CD8-positive, alpha-beta T cell (primary cell): ENCODE measurements at regions of chr17 and their contacts with region 1.

Region 1: GRCh38 chr17:65794572-65794971 is 233.1 kb upstream of the AXIN2 start:
- DNase-seq: peak in 2 of 9 experiments; percentile 22 to 44
- ATAC-seq: no peak
- H3K4me3 ChIP-seq: no peak overlapping the region
- H3K4me3 Mint-ChIP-seq: no peak overlapping the region
- H3K27ac ChIP-seq: no peak overlapping the region
- H3K27ac Mint-ChIP-seq: no peak overlapping the region
- H3K4me1 ChIP-seq: no peaks in the 10 kb centered on the region
- H3K4me1 Mint-ChIP-seq: no peaks in the 10 kb centered on the region
- H3K27me3 ChIP-seq: no peaks in the 10 kb centered on the region
- H3K27me3 Mint-ChIP-seq: no peaks in the 10 kb centered on the region
- CTCF ChIP-seq: peak; percentile 53

Region 2: DNA sequence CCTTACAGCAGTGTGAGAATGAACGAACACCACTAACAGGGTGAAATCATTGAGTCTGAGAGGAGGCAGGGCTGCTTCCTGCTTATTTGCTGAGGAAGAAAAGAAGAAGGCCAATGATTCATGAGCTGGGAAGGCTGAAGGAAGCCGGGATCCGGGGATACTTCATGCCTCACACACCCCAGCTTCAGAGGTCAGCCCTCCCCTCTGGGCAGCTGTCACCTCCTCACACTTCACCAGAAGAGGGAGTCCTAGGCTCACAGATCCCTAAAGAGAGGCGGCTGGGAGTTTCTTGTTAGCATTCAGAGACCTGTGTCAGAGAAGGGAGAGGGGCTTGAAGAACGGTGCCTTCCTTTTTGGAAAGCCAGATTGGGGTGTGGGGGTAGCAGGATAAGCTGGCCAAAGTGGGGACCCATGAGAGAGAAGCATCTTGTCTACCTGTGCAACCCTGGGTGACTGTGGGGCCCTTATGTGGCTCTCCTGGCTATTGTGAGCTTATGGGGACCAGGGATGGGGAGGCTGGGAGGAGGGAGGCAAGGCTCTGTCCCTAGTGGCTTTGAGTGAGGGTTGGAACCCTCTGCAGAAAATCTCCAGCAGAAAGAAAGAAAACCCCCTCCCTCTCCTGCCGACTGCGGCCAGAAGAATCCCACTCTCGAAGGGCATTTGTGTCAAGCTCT is 562.8 kb before region 1 on chr17:
- CTCF ChIA-PET with region 1: interaction called, 4 read pairs
- POLR2A ChIA-PET with region 1: no interaction called
- intact Hi-C with region 1: loop called in 1 of 2 experiments (anchors 5 kb)
- DNase-seq: peak in 7 of 9 experiments; percentile 15 to 64 (median 28)
- ATAC-seq: no peak
- H3K4me3 ChIP-seq: no peak overlapping the region
- H3K4me3 Mint-ChIP-seq: no peak overlapping the region
- H3K27ac ChIP-seq: no peak overlapping the region
- H3K27ac Mint-ChIP-seq: no peak overlapping the region
- H3K4me1 ChIP-seq: peaks cover 21% of the 10 kb centered on the region
- H3K4me1 Mint-ChIP-seq: peaks cover 20% of the 10 kb centered on the region
- H3K27me3 ChIP-seq: no peaks in the 10 kb centered on the region
- H3K27me3 Mint-ChIP-seq: peaks cover 5% of the 10 kb centered on the region
- CTCF ChIP-seq: no peak

Region 3: DNA sequence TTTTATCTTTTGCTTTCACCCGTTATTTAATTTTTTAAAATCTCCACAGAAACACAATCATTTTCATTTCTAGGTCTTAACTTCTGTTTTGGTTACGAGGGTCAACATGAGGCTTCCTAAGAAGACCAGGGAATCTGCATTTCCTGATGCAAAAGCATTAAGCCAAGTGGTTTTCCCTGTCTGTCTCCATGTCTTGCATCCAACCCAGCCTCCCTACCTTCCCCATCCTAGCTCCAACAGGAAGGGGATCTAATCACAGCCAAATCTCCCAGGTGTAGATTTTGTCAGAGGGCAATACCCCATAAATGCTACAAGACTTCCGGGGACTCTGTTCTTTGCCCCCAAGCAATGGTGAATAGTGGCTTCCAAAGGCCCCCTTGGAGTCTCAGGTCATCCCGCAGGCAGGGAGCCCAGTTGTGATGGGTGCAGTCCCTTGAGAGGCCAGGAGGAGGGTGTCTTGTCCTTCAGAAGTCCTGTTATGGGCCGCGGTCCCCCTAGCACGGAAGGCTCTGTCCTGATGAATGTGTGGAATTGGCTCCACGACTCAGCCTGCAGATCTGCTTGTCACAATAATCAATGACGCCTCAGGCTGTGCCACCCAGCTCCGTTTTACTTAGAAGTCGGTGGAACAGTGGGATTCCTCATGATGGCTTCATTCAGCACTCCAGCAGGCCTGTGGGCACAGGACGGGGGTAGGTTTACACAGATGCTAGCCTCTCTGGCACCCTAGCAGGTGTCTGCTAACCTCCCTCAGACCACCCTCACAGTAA is 516.3 kb before region 1 on chr17:
- CTCF ChIA-PET with region 1: no interaction called
- POLR2A ChIA-PET with region 1: no interaction called
- intact Hi-C with region 1: loop called in 1 of 2 experiments (anchors 5 kb)
- DNase-seq: peak in 5 of 9 experiments; percentile 13 to 32 (median 20)
- ATAC-seq: peak; percentile 48
- H3K4me3 ChIP-seq: no peak overlapping the region
- H3K4me3 Mint-ChIP-seq: no peak overlapping the region
- H3K27ac ChIP-seq: no peak overlapping the region
- H3K27ac Mint-ChIP-seq: no peak overlapping the region
- H3K4me1 ChIP-seq: no peaks in the 10 kb centered on the region
- H3K4me1 Mint-ChIP-seq: peaks cover 11% of the 10 kb centered on the region
- H3K27me3 ChIP-seq: no peaks in the 10 kb centered on the region
- H3K27me3 Mint-ChIP-seq: peaks cover 18% of the 10 kb centered on the region
- CTCF ChIP-seq: peak; percentile 27

Region 4: DNA sequence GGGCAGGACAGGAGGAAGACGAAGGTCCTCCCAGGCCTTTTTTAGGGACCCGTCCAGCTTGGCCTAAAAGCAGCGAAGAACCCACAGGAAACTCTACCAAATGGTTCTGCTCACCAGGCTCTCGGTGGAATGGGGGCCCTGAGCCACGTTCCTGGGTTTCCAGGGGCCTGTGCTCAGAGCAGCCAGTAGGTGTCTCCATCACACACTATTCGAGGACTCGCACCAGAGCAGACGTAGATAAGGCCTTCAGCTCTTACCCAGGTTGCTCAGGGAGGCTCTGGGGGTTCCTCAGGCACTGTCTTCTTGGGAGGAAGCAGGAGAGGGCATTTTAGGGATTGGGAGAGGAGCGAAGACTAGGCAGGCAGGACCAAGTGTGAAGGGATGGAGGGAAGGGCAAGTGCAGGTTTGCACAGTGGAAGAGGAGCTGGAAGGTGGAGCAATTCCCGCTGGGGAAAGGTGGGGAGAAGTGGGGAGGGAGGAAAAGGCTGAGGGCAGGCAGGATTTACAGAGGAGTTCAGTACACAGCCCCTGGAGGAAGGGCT is 500.3 kb before region 1 on chr17:
- CTCF ChIA-PET with region 1: interaction called, 53 read pairs
- POLR2A ChIA-PET with region 1: no interaction called
- intact Hi-C with region 1: loop called in 1 of 2 experiments (anchors 1 kb)
- DNase-seq: peak; percentile 33 to 76 (median 61)
- ATAC-seq: peak; percentile 80
- H3K4me3 ChIP-seq: no peak overlapping the region
- H3K4me3 Mint-ChIP-seq: no peak overlapping the region
- H3K27ac ChIP-seq: no peak overlapping the region
- H3K27ac Mint-ChIP-seq: no peak overlapping the region
- H3K4me1 ChIP-seq: no peaks in the 10 kb centered on the region
- H3K4me1 Mint-ChIP-seq: peaks cover 4% of the 10 kb centered on the region
- H3K27me3 ChIP-seq: no peaks in the 10 kb centered on the region
- H3K27me3 Mint-ChIP-seq: no peaks in the 10 kb centered on the region
- CTCF ChIP-seq: peak; percentile 60

Region 5: DNA sequence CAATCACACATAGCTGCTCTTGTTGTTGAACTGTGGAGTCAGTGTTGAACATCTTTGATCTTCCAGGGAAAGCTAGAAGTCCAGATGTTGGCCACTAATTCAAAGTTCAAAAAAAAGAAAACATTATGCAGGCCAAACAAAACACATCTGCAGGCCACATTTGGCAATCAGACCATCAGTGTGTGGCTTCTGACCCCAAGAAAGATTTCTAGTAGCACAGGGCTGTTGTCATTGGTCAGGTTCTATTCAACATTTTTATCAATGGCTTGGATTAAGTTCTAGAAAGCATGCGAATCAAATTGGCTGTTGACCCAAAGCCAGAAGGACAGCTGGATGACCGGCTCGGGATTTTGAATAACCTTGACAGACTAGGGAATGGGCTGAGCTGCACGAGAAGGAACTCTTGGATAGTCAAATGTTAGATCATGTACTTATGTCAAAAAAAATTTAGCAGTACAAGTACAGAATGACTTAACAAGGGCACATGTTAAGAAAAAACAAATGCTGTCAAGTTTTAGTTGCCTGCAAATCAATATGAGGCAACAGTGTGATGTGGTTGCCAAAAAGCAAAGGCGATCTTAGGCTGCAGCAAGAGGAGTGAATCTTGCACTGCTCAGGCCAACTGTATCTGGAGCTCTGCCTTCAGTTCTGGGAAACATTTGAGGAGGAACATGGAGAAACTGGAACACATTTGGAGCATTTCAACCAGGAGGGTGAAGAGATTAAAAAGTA is 469.8 kb before region 1 on chr17:
- CTCF ChIA-PET with region 1: no interaction called
- POLR2A ChIA-PET with region 1: no interaction called
- intact Hi-C with region 1: no loop called
- DNase-seq: no peak
- ATAC-seq: no peak
- H3K4me3 ChIP-seq: no peak overlapping the region
- H3K4me3 Mint-ChIP-seq: no peak overlapping the region
- H3K27ac ChIP-seq: no peak overlapping the region
- H3K27ac Mint-ChIP-seq: no peak overlapping the region
- H3K4me1 ChIP-seq: no peaks in the 10 kb centered on the region
- H3K4me1 Mint-ChIP-seq: peaks cover 2% of the 10 kb centered on the region
- H3K27me3 ChIP-seq: no peaks in the 10 kb centered on the region
- H3K27me3 Mint-ChIP-seq: no peaks in the 10 kb centered on the region
- CTCF ChIP-seq: no peak

Region 6: GRCh38 chr17:65413390-65413789 is 381.2 kb before region 1 on chr17:
- CTCF ChIA-PET with region 1: no interaction called
- POLR2A ChIA-PET with region 1: no interaction called
- intact Hi-C with region 1: loop called in 1 of 2 experiments (anchors 5 kb)
- DNase-seq: no peak
- ATAC-seq: no peak
- H3K4me3 ChIP-seq: no peak overlapping the region
- H3K4me3 Mint-ChIP-seq: no peak overlapping the region
- H3K27ac ChIP-seq: no peak overlapping the region
- H3K27ac Mint-ChIP-seq: no peak overlapping the region
- H3K4me1 ChIP-seq: no peaks in the 10 kb centered on the region
- H3K4me1 Mint-ChIP-seq: no peaks in the 10 kb centered on the region
- H3K27me3 ChIP-seq: no peaks in the 10 kb centered on the region
- H3K27me3 Mint-ChIP-seq: peaks cover 3% of the 10 kb centered on the region
- CTCF ChIP-seq: no peak

Region 7: DNA sequence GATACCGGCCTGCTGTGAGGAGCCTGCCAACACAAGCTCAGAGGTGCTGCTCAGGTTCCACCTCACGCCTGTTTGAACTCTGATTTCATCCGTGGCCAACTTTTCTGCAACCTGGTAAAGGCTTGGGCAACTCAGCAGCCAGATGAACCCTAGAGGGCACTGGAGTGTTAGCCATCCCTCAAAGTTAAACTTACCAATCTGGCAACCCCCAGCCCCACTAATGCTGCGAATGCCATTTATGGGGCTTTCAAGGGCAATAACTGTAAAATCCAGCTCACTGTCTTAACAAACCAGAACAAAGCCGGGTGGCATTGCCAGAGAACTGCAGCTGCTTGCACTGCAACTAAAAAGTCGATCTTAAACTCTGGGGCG is 338.6 kb before region 1 on chr17:
- CTCF ChIA-PET with region 1: no interaction called
- POLR2A ChIA-PET with region 1: no interaction called
- intact Hi-C with region 1: loop called in 1 of 2 experiments (anchors 5 kb)
- DNase-seq: peak in 4 of 9 experiments; percentile 10 to 48 (median 22)
- ATAC-seq: peak; percentile 36
- H3K4me3 ChIP-seq: no peak overlapping the region
- H3K4me3 Mint-ChIP-seq: no peak overlapping the region
- H3K27ac ChIP-seq: no peak overlapping the region
- H3K27ac Mint-ChIP-seq: no peak overlapping the region
- H3K4me1 ChIP-seq: no peaks in the 10 kb centered on the region
- H3K4me1 Mint-ChIP-seq: peaks cover 6% of the 10 kb centered on the region
- H3K27me3 ChIP-seq: no peaks in the 10 kb centered on the region
- H3K27me3 Mint-ChIP-seq: no peaks in the 10 kb centered on the region
- CTCF ChIP-seq: no peak

Region 8: GRCh38 chr17:65756760-65757159 is 37.8 kb before region 1 on chr17:
- CTCF ChIA-PET with region 1: no interaction called
- POLR2A ChIA-PET with region 1: no interaction called
- intact Hi-C with region 1: no loop called
- DNase-seq: no peak
- ATAC-seq: no peak
- H3K4me3 ChIP-seq: no peak overlapping the region
- H3K4me3 Mint-ChIP-seq: no peak overlapping the region
- H3K27ac ChIP-seq: no peak overlapping the region
- H3K27ac Mint-ChIP-seq: no peak overlapping the region
- H3K4me1 ChIP-seq: peaks cover 6% of the 10 kb centered on the region
- H3K4me1 Mint-ChIP-seq: peaks cover 3% of the 10 kb centered on the region
- H3K27me3 ChIP-seq: no peaks in the 10 kb centered on the region
- H3K27me3 Mint-ChIP-seq: no peaks in the 10 kb centered on the region
- CTCF ChIP-seq: no peak